ENCODE measurements at regions of chr17 and their contacts with region 1.

Region 1: DNA sequence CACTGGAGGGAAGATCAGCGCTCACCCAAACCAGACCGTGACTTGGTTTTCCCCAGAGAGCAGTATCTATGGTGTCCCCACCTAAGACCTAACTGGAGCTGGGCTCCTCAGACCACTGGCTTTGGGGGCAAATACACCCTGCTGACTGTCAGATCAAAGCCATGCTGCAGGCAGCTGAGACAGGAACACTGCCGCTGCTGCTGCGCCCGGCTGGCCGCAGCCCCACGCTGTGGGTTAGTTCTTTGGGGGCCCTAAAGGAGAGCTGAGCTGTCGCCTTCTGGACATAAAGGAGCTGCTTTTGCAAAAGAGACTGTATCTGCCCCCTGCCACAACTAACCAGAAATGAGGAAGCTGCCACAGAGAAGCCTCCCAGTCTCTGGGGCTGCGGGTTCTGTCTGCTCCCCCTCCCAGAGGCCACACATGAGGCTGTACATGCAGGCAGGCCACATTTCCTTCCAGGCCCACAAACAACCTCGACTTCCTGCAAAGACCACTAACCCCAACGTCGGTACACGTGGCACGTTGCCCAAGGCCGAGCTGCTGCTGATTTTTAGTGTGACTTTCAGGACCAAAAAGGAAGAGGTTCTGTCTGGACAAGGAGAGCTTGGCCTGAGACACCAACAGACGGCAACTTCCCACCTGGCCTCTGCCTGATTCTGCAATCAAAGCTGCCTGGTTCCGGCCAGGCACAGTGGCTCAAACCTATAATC is 18.2 kb upstream of the ABR start:
- DNase-seq: peak; percentile 67
- H3K4me3 Mint-ChIP-seq: no peak overlapping the region
- H3K27ac Mint-ChIP-seq: peak overlapping the region; percentile 38
- H3K4me1 Mint-ChIP-seq: peaks cover 32% of the 10 kb centered on the region
- H3K27me3 Mint-ChIP-seq: no peaks in the 10 kb centered on the region

Region 2: GRCh38 chr17:1005361-1005946 is 192.5 kb before region 1 on chr17:
- CTCF ChIA-PET with region 1: no interaction called
- POLR2A ChIA-PET with region 1: no interaction called
- intact Hi-C with region 1: no loop called
- DNase-seq: no peak
- H3K4me3 Mint-ChIP-seq: no peak overlapping the region
- H3K27ac Mint-ChIP-seq: peak overlapping the region; percentile 0
- H3K4me1 Mint-ChIP-seq: peaks cover 4% of the 10 kb centered on the region
- H3K27me3 Mint-ChIP-seq: no peaks in the 10 kb centered on the region

Region 3: GRCh38 chr17:1122533-1123392 is 75.2 kb before region 1 on chr17:
- CTCF ChIA-PET with region 1: interaction called, 13 read pairs
- POLR2A ChIA-PET with region 1: no interaction called
- intact Hi-C with region 1: no loop called
- DNase-seq: peak; percentile 90
- H3K4me3 Mint-ChIP-seq: no peak overlapping the region
- H3K27ac Mint-ChIP-seq: no peak overlapping the region
- H3K4me1 Mint-ChIP-seq: peaks cover 6% of the 10 kb centered on the region
- H3K27me3 Mint-ChIP-seq: no peaks in the 10 kb centered on the region

Region 4: DNA sequence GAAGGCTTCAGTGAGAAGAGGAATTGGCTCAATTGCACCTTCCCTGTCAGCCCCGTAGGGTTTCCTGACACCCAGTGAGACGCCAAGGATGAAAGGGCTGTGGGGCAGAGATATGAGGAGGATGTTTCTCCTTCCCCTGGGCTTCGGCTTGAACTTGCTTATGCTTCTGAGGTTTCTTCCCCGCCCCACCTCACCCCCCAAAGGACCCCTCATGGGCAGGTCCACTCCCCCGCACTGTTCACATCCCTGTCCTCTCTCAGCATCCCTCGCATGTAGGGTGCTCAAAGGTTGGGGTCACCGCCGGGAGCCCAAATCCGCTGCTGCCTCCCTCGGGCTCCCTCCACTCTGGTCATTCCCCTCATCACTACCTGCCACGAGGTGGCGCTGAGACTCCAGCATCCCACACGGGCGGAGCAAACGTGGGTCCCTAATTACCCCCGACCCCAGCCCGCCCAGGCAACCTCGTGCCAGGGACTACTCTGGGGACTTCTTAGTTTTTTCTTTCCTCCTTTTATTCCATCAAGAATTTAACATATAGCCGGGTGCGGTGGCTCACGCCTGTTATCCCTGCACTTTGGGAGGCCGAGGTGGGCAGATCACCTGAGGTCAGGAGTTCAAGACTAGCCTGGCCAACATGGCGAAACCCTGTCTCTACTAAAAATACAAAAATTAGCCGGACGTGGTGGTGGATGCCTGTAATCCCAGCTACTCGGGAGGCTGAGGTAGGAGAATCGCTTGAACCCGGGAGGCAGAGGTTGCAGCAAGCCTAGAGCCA is 78.2 kb after region 1 on chr17:
- CTCF ChIA-PET with region 1: no interaction called
- POLR2A ChIA-PET with region 1: no interaction called
- intact Hi-C with region 1: no loop called
- DNase-seq: peak; percentile 79
- H3K4me3 Mint-ChIP-seq: peak overlapping the region; percentile 6
- H3K27ac Mint-ChIP-seq: no peak overlapping the region
- H3K4me1 Mint-ChIP-seq: peaks cover 3% of the 10 kb centered on the region
- H3K27me3 Mint-ChIP-seq: peaks cover 16% of the 10 kb centered on the region